Thyroid gland (tissue), 4 donors: ENCODE measurements at regions of chr6 and their contacts with region 1.

Region 1: GRCh38 chr6:129567374-129567773 is 142.6 kb downstream of the ARHGAP18 start:
- DNase-seq: no peak
- H3K4me3 ChIP-seq: no peak overlapping the region
- H3K27ac ChIP-seq: no peak overlapping the region
- H3K4me1 ChIP-seq: no peaks in the 10 kb centered on the region
- H3K27me3 ChIP-seq: no peaks in the 10 kb centered on the region
- CTCF ChIP-seq: peak in 2 of 6 experiments; percentile 11 to 17
- POLR2A ChIP-seq: no peak

Region 2: DNA sequence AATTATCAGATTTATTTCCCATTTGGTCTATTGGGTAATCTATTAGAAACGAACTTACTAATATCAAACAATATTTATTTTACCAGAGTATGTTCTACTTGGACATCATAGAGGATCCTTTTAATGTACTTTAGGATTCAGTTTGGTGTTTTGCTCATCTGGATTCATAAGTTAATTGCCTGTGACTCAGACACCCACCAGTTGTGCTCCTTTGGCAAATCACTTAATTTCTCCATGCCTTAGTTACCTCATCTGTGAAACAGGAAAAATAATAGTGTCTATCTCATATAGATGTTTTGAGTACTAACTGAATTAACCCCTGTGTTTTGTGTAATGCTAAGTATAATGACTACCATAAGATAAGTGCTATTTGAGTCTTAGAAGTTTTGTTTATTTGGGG is 392.3 kb before region 1 on chr6:
- intact Hi-C with region 1: no loop called
- DNase-seq: no peak
- H3K4me3 ChIP-seq: no peak overlapping the region
- H3K27ac ChIP-seq: no peak overlapping the region
- H3K4me1 ChIP-seq: no peaks in the 10 kb centered on the region
- H3K27me3 ChIP-seq: no peaks in the 10 kb centered on the region
- CTCF ChIP-seq: no peak
- POLR2A ChIP-seq: no peak

Region 3: GRCh38 chr6:129498950-129499842 is 68.2 kb before region 1 on chr6:
- intact Hi-C with region 1: loop called (anchors 5 kb)
- DNase-seq: no peak
- H3K4me3 ChIP-seq: no peak overlapping the region
- H3K27ac ChIP-seq: no peak overlapping the region
- H3K4me1 ChIP-seq: peaks cover 3 to 9% of the 10 kb centered on the region in 2 donors
- H3K27me3 ChIP-seq: no peaks in the 10 kb centered on the region
- CTCF ChIP-seq: peak; percentile 25 to 82 (median 62)
- POLR2A ChIP-seq: no peak